ENCODE measurements at regions of chr20 and their contacts with region 1.

Region 1: GRCh38 chr20:47677635-47678453 is 107.4 kb downstream of the SULF2 start:
- DNase-seq: no peak
- ATAC-seq: peak; percentile 84
- H3K4me3 ChIP-seq: no peak overlapping the region
- H3K27ac ChIP-seq: no peak overlapping the region
- H3K4me1 ChIP-seq: no peaks in the 10 kb centered on the region
- H3K27me3 ChIP-seq: no peaks in the 10 kb centered on the region; a peak in 1 of 4 replicates
- CTCF ChIP-seq: peak; percentile 80 to 90 (median 83)
- EP300 ChIP-seq: no peak
- POLR2A ChIP-seq: no peak
- RAD21 ChIP-seq: peak; percentile 77

Region 2: DNA sequence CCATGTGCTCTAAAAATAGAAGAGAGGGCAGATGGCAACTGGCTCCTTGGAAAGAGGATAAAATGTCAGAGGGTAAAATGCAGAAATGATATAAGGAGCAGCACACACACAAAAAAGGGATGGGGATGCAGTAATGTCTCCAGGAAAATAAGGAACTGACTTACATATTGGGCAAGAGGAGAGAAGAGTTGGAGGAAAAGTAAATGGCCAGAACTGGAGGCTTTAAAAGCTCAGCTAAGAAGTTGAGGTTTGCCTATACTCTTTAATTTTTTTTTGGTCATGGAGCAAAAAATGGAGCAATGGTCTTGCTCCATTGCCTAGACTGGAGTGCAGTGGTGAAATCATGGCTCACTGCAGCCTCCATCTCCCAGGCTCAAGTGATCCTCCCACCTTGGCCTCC is 13.8 kb after region 1 on chr20:
- CTCF ChIA-PET with region 1: interaction called, 13 read pairs
- POLR2A ChIA-PET with region 1: no interaction called
- RAD21 ChIA-PET with region 1: interaction called, 7 read pairs
- SMC1A ChIA-PET with region 1: interaction called, 6 read pairs
- in situ Hi-C with region 1: no loop called
- intact Hi-C with region 1: no loop called
- DNase-seq: no peak
- ATAC-seq: no peak
- H3K4me3 ChIP-seq: no peak overlapping the region
- H3K27ac ChIP-seq: no peak overlapping the region
- H3K4me1 ChIP-seq: peaks cover 13% of the 10 kb centered on the region
- H3K27me3 ChIP-seq: no peaks in the 10 kb centered on the region; a peak in 1 of 4 replicates
- CTCF ChIP-seq: no peak
- EP300 ChIP-seq: no peak
- POLR2A ChIP-seq: no peak
- RAD21 ChIP-seq: no peak

Region 3: DNA sequence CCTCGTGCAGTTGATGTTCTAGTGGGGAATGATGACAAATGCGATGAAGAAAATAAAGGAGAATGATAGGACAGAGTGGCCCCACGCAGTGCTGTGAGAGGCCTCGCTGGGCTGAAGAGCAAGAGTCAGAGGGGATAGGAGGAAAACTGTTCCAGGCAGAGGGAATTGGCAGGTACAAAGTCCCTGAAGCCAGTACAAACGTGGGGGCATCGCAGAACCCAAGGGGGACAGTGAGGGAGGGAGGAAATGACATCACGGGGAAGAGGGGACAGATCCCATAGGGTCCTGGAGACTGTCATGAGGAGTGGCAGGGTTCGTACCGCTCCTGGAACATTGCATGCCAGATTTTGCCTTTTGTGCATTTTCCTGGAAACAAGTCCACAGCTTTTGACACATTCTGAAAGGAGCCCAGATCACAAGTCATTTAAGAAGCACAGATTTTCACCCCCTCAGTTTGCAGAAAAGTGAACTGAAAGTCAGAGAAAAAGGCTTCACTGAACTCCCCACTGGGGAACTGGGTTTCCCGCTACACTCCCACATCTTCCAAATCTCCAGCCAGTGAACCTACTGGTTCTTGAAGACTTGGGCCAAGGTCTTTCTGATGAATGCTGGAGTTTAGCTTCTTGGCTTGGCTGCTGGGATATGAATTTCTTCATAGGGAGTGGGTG is 30.4 kb after region 1 on chr20:
- CTCF ChIA-PET with region 1: interaction called, 74 read pairs
- POLR2A ChIA-PET with region 1: no interaction called
- RAD21 ChIA-PET with region 1: interaction called, 16 read pairs
- SMC1A ChIA-PET with region 1: interaction called, 34 read pairs
- in situ Hi-C with region 1: no loop called
- intact Hi-C with region 1: loop called (anchors 2 kb)
- DNase-seq: peak; percentile 30
- ATAC-seq: peak; percentile 58
- H3K4me3 ChIP-seq: no peak overlapping the region
- H3K27ac ChIP-seq: no peak overlapping the region
- H3K4me1 ChIP-seq: peaks cover 36% of the 10 kb centered on the region
- H3K27me3 ChIP-seq: no peaks in the 10 kb centered on the region
- CTCF ChIP-seq: no peak
- EP300 ChIP-seq: peak in 1 of 2 experiments; percentile 92; a peak in 3 of 4 replicates
- POLR2A ChIP-seq: no peak
- RAD21 ChIP-seq: no peak

Region 4: GRCh38 chr20:47713878-47714450 is 36.1 kb after region 1 on chr20:
- CTCF ChIA-PET with region 1: interaction called, 74 read pairs
- POLR2A ChIA-PET with region 1: no interaction called
- RAD21 ChIA-PET with region 1: interaction called, 16 read pairs
- SMC1A ChIA-PET with region 1: interaction called, 34 read pairs
- in situ Hi-C with region 1: no loop called
- intact Hi-C with region 1: loop called (anchors 2 kb)
- DNase-seq: no peak
- ATAC-seq: no peak
- H3K4me3 ChIP-seq: no peak overlapping the region
- H3K27ac ChIP-seq: no peak overlapping the region
- H3K4me1 ChIP-seq: peaks cover 21% of the 10 kb centered on the region
- H3K27me3 ChIP-seq: no peaks in the 10 kb centered on the region
- CTCF ChIP-seq: no peak
- EP300 ChIP-seq: no peak
- POLR2A ChIP-seq: no peak
- RAD21 ChIP-seq: no peak

Region 5: DNA sequence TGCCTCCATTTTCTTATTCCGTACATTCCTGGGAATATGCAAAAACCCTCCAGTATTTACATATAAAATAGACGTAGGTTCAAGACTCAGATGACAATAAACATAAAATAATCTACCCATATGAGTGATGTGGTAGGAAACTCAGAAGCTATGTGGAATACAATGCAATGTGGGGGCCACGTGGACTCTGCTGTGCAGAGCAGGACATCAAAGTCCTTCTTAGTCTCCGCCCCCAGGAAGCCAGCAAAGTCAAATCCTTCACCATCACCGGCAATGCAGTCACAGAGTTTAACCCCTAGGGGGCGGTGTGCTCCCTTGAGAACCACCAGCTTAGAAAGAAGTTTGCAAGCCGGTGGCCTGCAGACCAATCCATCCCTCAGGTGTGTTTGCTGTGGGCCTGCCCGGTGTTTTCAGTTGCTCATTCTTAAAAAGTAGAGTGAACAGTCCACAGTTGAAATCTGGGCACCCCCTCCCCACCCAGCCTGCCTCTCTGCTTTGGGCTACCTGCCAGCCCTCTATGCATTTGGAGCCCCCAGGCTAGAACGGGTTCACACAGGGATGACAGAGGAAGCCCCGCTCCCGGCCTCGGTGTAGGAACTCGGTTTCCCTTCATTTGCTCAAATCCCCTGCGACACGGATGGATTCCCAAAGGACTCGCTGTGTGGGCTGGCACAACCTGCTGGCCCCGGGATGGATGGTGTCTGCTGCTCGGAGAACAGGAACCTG is 47.6 kb after region 1 on chr20:
- CTCF ChIA-PET with region 1: interaction called, 14 read pairs
- POLR2A ChIA-PET with region 1: no interaction called
- RAD21 ChIA-PET with region 1: interaction called, 4 read pairs
- SMC1A ChIA-PET with region 1: interaction called, 21 read pairs
- in situ Hi-C with region 1: no loop called
- intact Hi-C with region 1: no loop called
- DNase-seq: peak; percentile 63
- ATAC-seq: peak; percentile 87
- H3K4me3 ChIP-seq: no peak overlapping the region
- H3K27ac ChIP-seq: no peak overlapping the region
- H3K4me1 ChIP-seq: peaks cover 21% of the 10 kb centered on the region
- H3K27me3 ChIP-seq: no peaks in the 10 kb centered on the region
- CTCF ChIP-seq: peak; percentile 84 to 95 (median 84)
- EP300 ChIP-seq: no peak
- POLR2A ChIP-seq: no peak
- RAD21 ChIP-seq: peak; percentile 85

Region 6: GRCh38 chr20:47785854-47786764 is 108.3 kb after region 1 on chr20:
- CTCF ChIA-PET with region 1: interaction called, 3 read pairs
- POLR2A ChIA-PET with region 1: no interaction called
- RAD21 ChIA-PET with region 1: no interaction called
- SMC1A ChIA-PET with region 1: interaction called, 3 read pairs
- in situ Hi-C with region 1: no loop called
- intact Hi-C with region 1: loop called (anchors 5 kb)
- DNase-seq: no peak
- ATAC-seq: peak; percentile 85
- H3K4me3 ChIP-seq: peak overlapping the region; percentile 8; the same call in 1 of the 2 replicates
- H3K27ac ChIP-seq: no peak overlapping the region
- H3K4me1 ChIP-seq: 0 out of 2 replicates have a peak, but pooled peaks cover 2% of the 10 kb centered on the region
- H3K27me3 ChIP-seq: peaks cover 6 to 20% of the 10 kb centered on the region in 2 experiments
- CTCF ChIP-seq: peak; percentile 41 to 62 (median 42); a peak in 5 of 6 replicates
- EP300 ChIP-seq: no peak
- POLR2A ChIP-seq: no peak
- RAD21 ChIP-seq: peak; percentile 83